Mammary epithelial cell (primary cell): ENCODE measurements at regions of chr10 and their contacts with region 1.

Region 1: GRCh38 chr10:128047351-128047750 is 78.9 kb downstream of the MKI67 start:
- DNase-seq: peak; percentile 95
- H3K4me3 ChIP-seq: peak overlapping the region; percentile 66 to 70 (median 66)
- H3K27ac ChIP-seq: peak overlapping the region; percentile 93
- H3K4me1 ChIP-seq: peaks cover 35% of the 10 kb centered on the region
- H3K27me3 ChIP-seq: no peaks in the 10 kb centered on the region
- CTCF ChIP-seq: peak in 1 of 2 donors; percentile 32

Region 2: GRCh38 chr10:127977357-127978009 is 69.9 kb before region 1 on chr10:
- CTCF ChIA-PET with region 1: no interaction called
- dilution Hi-C with region 1: loop called (anchors 5 kb)
- in situ Hi-C with region 1: no loop called
- intact Hi-C with region 1: no loop called
- DNase-seq: peak; percentile 81
- H3K4me3 ChIP-seq: peak overlapping the region in 1 of 3 experiments; percentile 3
- H3K27ac ChIP-seq: peak overlapping the region; percentile 11
- H3K4me1 ChIP-seq: peaks cover 19% of the 10 kb centered on the region
- H3K27me3 ChIP-seq: no peaks in the 10 kb centered on the region
- CTCF ChIP-seq: no peak

Region 3: GRCh38 chr10:128035557-128035973 is 11.8 kb before region 1 on chr10:
- CTCF ChIA-PET with region 1: no interaction called
- dilution Hi-C with region 1: no loop called
- in situ Hi-C with region 1: no loop called
- intact Hi-C with region 1: loop called (anchors 1 kb)
- DNase-seq: peak; percentile 32
- H3K4me3 ChIP-seq: no peak overlapping the region
- H3K27ac ChIP-seq: no peak overlapping the region
- H3K4me1 ChIP-seq: peaks cover 8% of the 10 kb centered on the region
- H3K27me3 ChIP-seq: no peaks in the 10 kb centered on the region
- CTCF ChIP-seq: peak; percentile 84 to 97

Region 4: GRCh38 chr10:128064108-128064969 is 17.0 kb after region 1 on chr10:
- CTCF ChIA-PET with region 1: interaction called, 7 read pairs
- dilution Hi-C with region 1: no loop called
- in situ Hi-C with region 1: no loop called
- intact Hi-C with region 1: loop called (anchors 1 kb)
- DNase-seq: peak; percentile 97
- H3K4me3 ChIP-seq: no peak overlapping the region
- H3K27ac ChIP-seq: peak overlapping the region; percentile 97
- H3K4me1 ChIP-seq: peaks cover 46% of the 10 kb centered on the region
- H3K27me3 ChIP-seq: no peaks in the 10 kb centered on the region
- CTCF ChIP-seq: no peak

Region 5: GRCh38 chr10:128069351-128070051 is 22.1 kb after region 1 on chr10:
- CTCF ChIA-PET with region 1: interaction called, 7 read pairs
- dilution Hi-C with region 1: no loop called
- in situ Hi-C with region 1: no loop called
- intact Hi-C with region 1: loop called (anchors 1 kb)
- DNase-seq: peak; percentile 85
- H3K4me3 ChIP-seq: no peak overlapping the region
- H3K27ac ChIP-seq: no peak overlapping the region
- H3K4me1 ChIP-seq: peaks cover 33% of the 10 kb centered on the region
- H3K27me3 ChIP-seq: no peaks in the 10 kb centered on the region
- CTCF ChIP-seq: peak; percentile 74 to 84

Region 6: DNA sequence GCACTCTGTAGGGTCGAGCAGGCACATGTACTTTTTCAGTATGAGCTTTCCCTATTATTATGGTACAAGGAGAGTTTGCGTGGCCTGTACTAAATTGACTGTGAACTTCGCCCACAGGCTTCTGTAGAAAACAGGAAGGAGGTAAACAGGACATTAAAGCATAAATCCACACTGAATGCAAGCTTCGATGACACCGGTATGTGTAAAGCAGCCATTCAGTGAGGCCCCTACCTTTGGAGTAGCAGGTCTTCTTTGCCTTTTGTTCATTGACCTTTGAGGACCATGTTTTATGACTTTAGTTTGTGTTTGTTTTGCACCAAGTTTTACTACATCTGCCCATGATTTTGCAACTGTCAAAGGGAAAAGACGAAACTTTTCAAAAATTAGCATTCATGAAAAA is 64.3 kb after region 1 on chr10:
- CTCF ChIA-PET with region 1: no interaction called
- dilution Hi-C with region 1: no loop called
- in situ Hi-C with region 1: no loop called
- intact Hi-C with region 1: no loop called
- DNase-seq: no peak
- H3K4me3 ChIP-seq: no peak overlapping the region
- H3K27ac ChIP-seq: no peak overlapping the region
- H3K4me1 ChIP-seq: peaks cover 6% of the 10 kb centered on the region
- H3K27me3 ChIP-seq: no peaks in the 10 kb centered on the region
- CTCF ChIP-seq: no peak